ENCODE measurements at regions of chr2 and their contacts with region 1.

Region 1: GRCh38 chr2:162318328-162319180 is at the start of gene IFIH1:
- DNase-seq: peak; percentile 87
- ATAC-seq: peak; percentile 93
- H3K4me3 Mint-ChIP-seq: peak within 1 kb of the TSS; percentile 85
- H3K27ac Mint-ChIP-seq: peak within 1 kb of the TSS; percentile 98
- H3K4me1 Mint-ChIP-seq: peaks cover 54% of the 10 kb centered on the region
- H3K27me3 Mint-ChIP-seq: no peaks in the 10 kb centered on the region
- total RNA-seq, gene IFIH1: 36.8 to 42.3 TPM

Region 2: DNA sequence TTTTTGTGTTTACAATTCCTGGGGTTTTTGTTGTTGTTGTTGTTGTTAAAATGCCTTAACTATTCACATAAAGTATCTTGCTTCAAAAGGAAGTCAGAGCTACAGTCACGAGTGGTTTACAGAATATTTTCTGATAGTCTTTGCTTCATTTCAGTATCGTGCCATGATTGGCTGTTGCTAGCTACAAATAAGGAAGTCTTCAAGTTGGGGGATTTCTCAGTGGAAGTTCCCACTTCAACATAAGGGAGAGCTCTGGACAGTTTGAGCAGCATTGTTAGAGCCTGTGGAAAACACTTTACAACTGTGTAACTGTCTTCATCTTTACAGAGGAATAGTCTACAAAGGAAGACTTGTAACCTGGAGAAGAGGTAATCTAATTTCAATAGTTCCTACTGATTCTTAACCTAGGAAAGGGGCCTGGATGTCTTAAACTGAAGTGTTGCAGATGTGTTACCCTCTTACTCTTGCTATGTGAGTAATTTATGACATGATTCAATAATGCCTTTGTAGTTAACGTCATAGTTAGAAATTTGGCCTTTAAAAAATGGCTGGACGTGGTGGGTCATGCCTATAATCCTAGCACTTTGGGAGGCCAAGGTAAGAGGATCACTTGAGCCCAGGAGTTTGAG is 1181.7 kb before region 1 on chr2:
- CTCF ChIA-PET with region 1: no interaction called
- POLR2A ChIA-PET with region 1: no interaction called
- intact Hi-C with region 1: loop called in 1 of 2 experiments (anchors 10 kb)
- DNase-seq: peak; percentile 30
- ATAC-seq: peak; percentile 82
- H3K4me3 Mint-ChIP-seq: peak overlapping the region; percentile 83
- H3K27ac Mint-ChIP-seq: peak overlapping the region; percentile 98
- H3K4me1 Mint-ChIP-seq: peaks cover 52% of the 10 kb centered on the region
- H3K27me3 Mint-ChIP-seq: no peaks in the 10 kb centered on the region

Region 3: GRCh38 chr2:161308178-161308955 is 1010.2 kb before region 1 on chr2 and contains the start of gene PSMD14:
- CTCF ChIA-PET with region 1: no interaction called
- POLR2A ChIA-PET with region 1: no interaction called
- intact Hi-C with region 1: loop called in 1 of 2 experiments (anchors 10 kb)
- DNase-seq: peak; percentile 96
- ATAC-seq: peak; percentile 91
- H3K4me3 Mint-ChIP-seq: peak within 1 kb of the TSS; percentile 87
- H3K27ac Mint-ChIP-seq: peak within 1 kb of the TSS; percentile 93
- H3K4me1 Mint-ChIP-seq: peaks cover 28% of the 10 kb centered on the region
- H3K27me3 Mint-ChIP-seq: no peaks in the 10 kb centered on the region
- total RNA-seq, gene PSMD14: 69.5 to 85.7 TPM

Region 4: GRCh38 chr2:161384864-161385263 is 933.7 kb before region 1 on chr2:
- CTCF ChIA-PET with region 1: no interaction called
- POLR2A ChIA-PET with region 1: no interaction called
- intact Hi-C with region 1: no loop called
- DNase-seq: peak; percentile 19
- ATAC-seq: peak; percentile 88
- H3K4me3 Mint-ChIP-seq: no peak overlapping the region
- H3K27ac Mint-ChIP-seq: no peak overlapping the region
- H3K4me1 Mint-ChIP-seq: peaks cover 9% of the 10 kb centered on the region
- H3K27me3 Mint-ChIP-seq: no peaks in the 10 kb centered on the region

Region 5: GRCh38 chr2:162073888-162074645 is 244.5 kb before region 1 on chr2 and contains the start of gene DPP4:
- CTCF ChIA-PET with region 1: no interaction called
- POLR2A ChIA-PET with region 1: no interaction called
- intact Hi-C with region 1: loop called in 1 of 2 experiments (anchors 5 kb)
- DNase-seq: peak; percentile 71
- ATAC-seq: peak; percentile 63
- H3K4me3 Mint-ChIP-seq: peak within 1 kb of the TSS; percentile 94
- H3K27ac Mint-ChIP-seq: peak within 1 kb of the TSS; percentile 91
- H3K4me1 Mint-ChIP-seq: peaks cover 43% of the 10 kb centered on the region
- H3K27me3 Mint-ChIP-seq: peaks cover 2% of the 10 kb centered on the region
- total RNA-seq, gene DPP4: 15.9 to 22.4 TPM

Region 6: GRCh38 chr2:162301151-162301804 is 17.3 kb before region 1 on chr2:
- CTCF ChIA-PET with region 1: interaction called, 72 read pairs
- POLR2A ChIA-PET with region 1: no interaction called
- intact Hi-C with region 1: no loop called
- DNase-seq: peak; percentile 74
- ATAC-seq: peak; percentile 73
- H3K4me3 Mint-ChIP-seq: no peak overlapping the region
- H3K27ac Mint-ChIP-seq: no peak overlapping the region
- H3K4me1 Mint-ChIP-seq: no peaks in the 10 kb centered on the region
- H3K27me3 Mint-ChIP-seq: no peaks in the 10 kb centered on the region

Region 7: GRCh38 chr2:162422891-162423290 is 104.3 kb after region 1 on chr2:
- CTCF ChIA-PET with region 1: no interaction called
- POLR2A ChIA-PET with region 1: no interaction called
- intact Hi-C with region 1: no loop called
- DNase-seq: no peak
- ATAC-seq: no peak
- H3K4me3 Mint-ChIP-seq: no peak overlapping the region
- H3K27ac Mint-ChIP-seq: no peak overlapping the region
- H3K4me1 Mint-ChIP-seq: no peaks in the 10 kb centered on the region
- H3K27me3 Mint-ChIP-seq: no peaks in the 10 kb centered on the region

Region 8: DNA sequence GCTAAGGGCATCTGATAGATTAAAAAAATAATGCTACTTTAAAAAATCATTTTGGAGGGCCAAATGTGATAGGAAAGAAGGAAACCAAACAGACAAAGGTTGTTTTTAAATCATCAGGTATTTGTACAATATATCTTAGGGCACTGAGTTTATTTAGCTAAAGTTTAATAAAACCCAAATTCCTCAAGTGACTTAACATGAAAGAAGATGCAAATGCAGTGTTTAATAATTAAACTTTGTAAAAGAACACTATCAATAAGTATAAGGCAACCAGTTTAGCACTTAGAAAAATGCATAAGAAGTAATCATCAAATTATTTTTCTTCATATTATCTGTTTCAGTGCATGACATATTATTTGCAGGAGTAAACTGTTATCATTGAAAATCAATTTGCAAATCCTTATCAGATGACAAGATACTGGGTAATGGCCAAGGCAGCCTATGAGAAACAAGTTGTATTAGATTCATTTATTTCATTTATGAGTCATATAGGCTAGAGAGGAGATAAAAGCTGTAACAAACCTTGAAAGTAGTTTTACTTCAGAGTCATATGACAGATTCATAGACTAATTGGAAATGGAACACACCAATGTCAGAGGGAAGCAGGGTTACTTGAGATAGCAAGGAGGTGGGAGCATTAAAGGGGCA is 190.9 kb after region 1 on chr2:
- CTCF ChIA-PET with region 1: no interaction called
- POLR2A ChIA-PET with region 1: no interaction called
- intact Hi-C with region 1: no loop called
- DNase-seq: no peak
- ATAC-seq: no peak
- H3K4me3 Mint-ChIP-seq: no peak overlapping the region
- H3K27ac Mint-ChIP-seq: no peak overlapping the region
- H3K4me1 Mint-ChIP-seq: no peaks in the 10 kb centered on the region
- H3K27me3 Mint-ChIP-seq: peaks cover 2% of the 10 kb centered on the region

Measured in activated CD4-positive, alpha-beta T cell treated with anti-CD3 and anti-CD28 coated beads for 36 hours (primary cell).